ENCODE measurements at regions of chr19 and their contacts with region 1.

Region 1: GRCh38 chr19:54231077-54231931 is 8.5 kb upstream of the LILRB3 start:
- H3K4me3 Mint-ChIP-seq: no peak overlapping the region
- H3K27ac Mint-ChIP-seq: no peak overlapping the region
- H3K4me1 Mint-ChIP-seq: peaks cover 10% of the 10 kb centered on the region
- H3K27me3 Mint-ChIP-seq: peaks cover 2% of the 10 kb centered on the region

Region 2: GRCh38 chr19:54168174-54168917 is 63.0 kb before region 1 on chr19:
- intact Hi-C with region 1: loop called (anchors 2 kb)
- H3K4me3 Mint-ChIP-seq: peak overlapping the region; percentile 10
- H3K27ac Mint-ChIP-seq: peak overlapping the region; percentile 52
- H3K4me1 Mint-ChIP-seq: peaks cover 50% of the 10 kb centered on the region
- H3K27me3 Mint-ChIP-seq: peaks cover 25% of the 10 kb centered on the region

Measured in dendritic cell treated with granulocyte-macrophage colony-stimulating factor and Interleukin-4, amounts not matched to agents 40 ng/mL and 50 ng/mL, for 4 days (primary cell).